Mucosa of descending colon (tissue), 3 donors: ENCODE measurements at regions of chr17 and their contacts with region 1.

Region 1: DNA sequence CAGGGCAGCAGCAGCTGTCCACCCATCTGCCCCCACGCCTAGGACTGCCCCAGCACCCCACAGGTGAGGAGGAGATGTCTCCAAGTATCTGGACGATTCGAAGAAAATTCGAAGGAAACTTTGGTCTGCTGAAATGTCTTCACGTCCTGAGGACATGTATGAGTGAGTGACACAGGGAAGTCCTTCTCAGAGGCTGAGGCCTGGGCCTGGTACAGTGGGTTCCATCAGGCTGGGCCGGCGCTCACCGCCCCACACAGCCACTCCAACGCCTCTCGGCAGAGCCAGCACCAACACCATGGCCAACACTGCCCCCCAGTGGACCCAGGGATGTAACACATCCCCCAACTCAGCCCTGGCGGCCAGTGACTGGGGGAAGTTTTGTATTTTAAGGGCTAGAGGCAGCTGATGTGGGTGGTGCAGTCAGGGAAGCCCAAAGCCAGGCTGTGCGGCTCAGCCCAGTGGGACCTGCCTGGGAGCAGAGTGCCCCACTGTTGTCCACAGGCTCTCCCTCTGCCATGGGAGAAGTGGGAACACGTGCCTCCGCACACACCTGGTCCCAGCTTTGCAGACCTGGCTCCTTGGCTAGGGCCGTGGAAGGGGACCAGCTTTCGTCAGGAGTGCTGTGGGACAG is 55.8 kb upstream of the FASN start:
- DNase-seq: peak; percentile 80 to 87 (median 81)
- ATAC-seq: peak; percentile 94
- H3K4me3 ChIP-seq: no peak overlapping the region
- H3K4me1 ChIP-seq: no peaks in the 10 kb centered on the region
- CTCF ChIP-seq: peak; percentile 72

Region 2: DNA sequence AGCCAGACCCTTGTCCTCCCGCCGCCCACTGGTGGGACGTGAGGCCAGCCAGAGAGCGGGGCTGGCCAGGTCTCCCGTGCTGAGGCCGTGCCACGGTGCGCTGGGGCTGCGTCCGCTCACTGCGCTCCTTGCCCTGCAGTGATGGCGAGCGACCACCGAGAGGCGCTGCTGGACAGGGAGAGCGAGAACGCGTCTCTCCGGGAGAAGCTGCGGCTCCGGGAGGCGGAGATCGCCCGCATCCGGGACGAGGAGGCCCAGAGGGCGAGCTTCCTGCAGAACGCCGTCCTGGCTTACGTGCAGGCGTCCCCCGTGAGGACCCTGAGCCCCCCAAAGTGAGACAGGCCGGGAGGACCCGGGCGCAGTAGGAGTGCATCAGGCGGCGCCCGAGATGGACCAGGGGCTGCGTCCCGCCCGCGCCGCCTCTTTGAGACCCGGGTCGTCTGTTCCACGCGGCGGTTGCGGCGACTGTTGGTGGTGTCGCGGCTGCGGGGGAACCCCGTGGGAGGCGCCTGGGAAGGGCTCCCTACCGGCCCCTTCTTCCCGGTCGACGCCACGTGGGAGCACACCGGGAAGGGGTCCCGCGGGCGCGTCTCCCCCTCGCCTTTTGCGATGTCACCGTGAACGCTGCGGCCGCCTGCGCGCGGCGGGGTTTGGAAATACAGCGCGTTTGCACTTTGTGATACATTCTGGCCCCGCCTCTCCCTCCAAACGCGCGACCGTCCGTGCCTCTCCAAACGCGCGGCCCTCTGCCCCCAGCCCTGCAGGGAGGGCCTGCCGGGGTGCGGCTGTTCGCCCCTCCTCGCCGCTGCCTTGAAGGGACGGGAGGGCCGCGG is 123.2 kb before region 1 on chr17:
- intact Hi-C with region 1: loop called (anchors 5 to 10 kb)
- DNase-seq: peak; percentile 78 to 92 (median 92)
- ATAC-seq: peak; percentile 94
- H3K4me3 ChIP-seq: no peak overlapping the region
- H3K4me1 ChIP-seq: peaks cover 12% of the 10 kb centered on the region
- CTCF ChIP-seq: peak; percentile 87

Region 3: DNA sequence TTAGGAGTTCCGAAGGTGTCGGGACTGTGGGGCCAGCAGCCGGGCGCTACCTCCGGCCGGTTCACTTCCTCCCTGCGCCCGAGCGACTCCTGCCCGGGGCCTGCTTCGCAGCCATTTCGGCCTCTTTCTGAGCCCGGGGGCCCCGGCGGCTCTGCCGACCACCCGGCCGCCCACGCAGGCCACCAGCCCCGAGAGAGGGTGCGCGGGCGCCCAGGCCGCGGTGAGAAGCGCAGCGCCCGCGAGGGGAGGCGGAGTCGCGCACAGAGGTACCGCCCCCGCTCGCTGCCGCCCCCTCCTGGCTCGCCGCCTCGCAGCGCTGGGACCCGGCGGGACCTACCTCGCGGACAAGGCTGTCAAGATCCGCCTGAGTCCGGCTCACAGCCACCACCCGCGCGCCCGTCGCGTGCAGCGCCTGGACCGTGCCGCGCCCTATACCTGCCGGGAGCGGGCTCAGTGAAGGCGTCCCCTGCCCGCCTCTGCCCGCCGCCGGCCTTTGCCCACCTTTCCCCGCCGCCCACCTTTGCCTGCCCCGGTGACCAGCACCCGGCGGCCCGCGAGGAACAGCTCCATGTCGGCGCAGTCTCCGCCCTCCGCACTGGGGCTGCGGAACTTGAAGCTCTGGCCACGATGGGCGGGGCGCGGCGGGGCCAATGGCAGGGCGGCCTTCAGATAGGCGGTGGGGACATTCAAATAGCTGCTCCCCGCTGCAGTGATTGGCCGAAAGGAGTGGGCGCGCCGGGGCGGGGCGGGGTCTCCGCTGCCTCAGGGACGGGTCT is 116.6 kb before region 1 on chr17 and contains the start of gene DCXR:
- intact Hi-C with region 1: loop called (anchors 5 to 10 kb)
- DNase-seq: peak; percentile 98 to 99 (median 98)
- ATAC-seq: peak; percentile 97
- H3K4me3 ChIP-seq: peak within 1 kb of the TSS; percentile 35
- H3K4me1 ChIP-seq: peaks cover 10% of the 10 kb centered on the region
- CTCF ChIP-seq: peak; percentile 94
- total RNA-seq, gene DCXR: 84.9 to 151 (median 124) TPM